Ovary (tissue), 10 donors: ENCODE measurements at regions of chr19 and their contacts with region 1.

Region 1: DNA sequence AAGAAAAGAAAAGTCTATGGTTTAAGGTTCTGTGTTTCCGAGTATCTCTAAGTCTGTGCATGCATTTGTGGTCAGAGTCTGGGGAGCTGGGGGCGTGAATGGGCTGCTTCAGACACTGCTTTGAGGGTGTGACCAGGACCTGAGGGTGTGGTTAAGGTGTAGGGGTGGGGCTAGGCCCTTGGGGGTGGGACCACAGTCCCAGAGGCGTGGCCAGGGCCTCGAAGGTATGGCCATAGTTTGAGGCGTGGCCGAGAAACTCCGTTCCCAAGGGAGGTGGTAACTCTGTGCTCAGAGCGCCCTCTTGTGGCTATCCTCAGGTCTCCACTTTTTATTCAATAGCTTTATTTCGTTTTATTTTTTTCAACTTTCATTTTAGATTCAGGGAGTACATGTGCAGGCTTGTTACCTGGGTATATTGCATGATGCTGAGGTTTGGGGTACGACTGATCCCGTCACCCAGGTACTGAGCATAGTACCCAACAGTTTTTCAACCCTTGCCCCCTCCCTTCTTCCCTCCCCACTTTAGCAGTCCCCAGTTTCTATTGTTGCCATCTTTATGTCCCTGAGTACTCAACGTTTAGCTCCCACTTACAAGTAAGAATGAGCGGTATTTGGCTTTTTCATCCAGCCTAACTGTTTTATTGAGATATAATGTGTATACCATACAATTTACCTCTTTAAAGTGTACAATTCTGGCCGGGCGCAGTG is 7.0 kb upstream of the CBLC start:
- DNase-seq: peak; percentile 85 to 92 (median 89)
- H3K4me3 ChIP-seq: no peak overlapping the region
- H3K27ac ChIP-seq: no peak overlapping the region
- H3K4me1 ChIP-seq: no peaks in the 10 kb centered on the region
- H3K27me3 ChIP-seq: no peaks in the 10 kb centered on the region
- CTCF ChIP-seq: peak; percentile 88 to 95 (median 89)
- EP300 ChIP-seq: no peak
- POLR2A ChIP-seq: no peak

Region 2: GRCh38 chr19:44576843-44577565 is 193.7 kb before region 1 on chr19:
- intact Hi-C with region 1: loop called in 1 of 4 experiments (anchors 5 kb)
- DNase-seq: no peak
- H3K4me3 ChIP-seq: no peak overlapping the region
- H3K27ac ChIP-seq: no peak overlapping the region
- H3K4me1 ChIP-seq: no peaks in the 10 kb centered on the region
- H3K27me3 ChIP-seq: no peaks in the 10 kb centered on the region
- CTCF ChIP-seq: no peak
- EP300 ChIP-seq: no peak
- POLR2A ChIP-seq: no peak

Region 3: DNA sequence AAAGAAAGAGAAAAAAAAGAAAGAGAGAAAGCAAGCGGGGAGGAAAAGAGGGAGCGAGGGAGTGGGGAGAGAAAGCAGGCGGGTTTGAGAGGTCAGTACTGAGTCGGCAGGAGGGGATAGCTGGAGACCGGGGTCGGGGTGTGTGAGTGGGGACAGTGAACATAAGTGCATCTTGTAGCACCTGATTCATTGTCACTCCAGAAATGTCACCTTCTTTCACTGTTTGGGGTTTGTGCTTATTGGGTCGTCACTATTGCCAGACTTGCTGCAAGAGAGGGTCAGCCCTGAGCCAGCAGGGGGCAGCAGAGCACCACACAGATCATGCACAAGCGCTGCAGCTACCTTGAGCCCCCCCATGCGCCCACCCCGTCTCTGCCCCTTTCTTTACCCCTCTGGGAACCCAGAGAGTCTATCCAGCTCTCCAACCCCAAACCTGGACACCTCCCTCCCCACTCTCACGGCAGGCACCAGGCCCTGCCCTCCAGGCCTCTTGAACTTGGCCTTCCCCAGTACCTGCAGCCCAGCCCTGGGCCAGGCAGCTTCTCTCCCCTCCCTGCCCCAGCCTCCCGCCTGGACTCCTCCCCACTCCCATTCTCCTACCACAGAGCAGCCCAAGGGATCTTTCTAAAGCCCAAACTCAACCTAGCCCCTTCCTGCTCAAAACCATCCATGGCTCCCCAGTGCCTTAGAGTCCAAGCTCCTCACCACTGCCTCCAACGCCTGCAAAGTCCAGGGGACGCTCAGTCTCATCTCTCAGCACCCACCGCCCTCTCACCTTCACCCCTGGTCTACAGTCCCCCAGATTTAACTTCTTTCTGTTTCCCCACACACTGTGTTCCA is 81.4 kb before region 1 on chr19:
- intact Hi-C with region 1: loop called in 3 of 4 experiments (anchors 5 to 10 kb)
- DNase-seq: peak; percentile 70 to 86 (median 82)
- H3K4me3 ChIP-seq: no peak overlapping the region
- H3K27ac ChIP-seq: no peak overlapping the region
- H3K4me1 ChIP-seq: peaks cover 4% of the 10 kb centered on the region
- H3K27me3 ChIP-seq: no peaks in the 10 kb centered on the region
- CTCF ChIP-seq: peak; percentile 81 to 87 (median 83)
- EP300 ChIP-seq: no peak
- POLR2A ChIP-seq: no peak

Region 4: GRCh38 chr19:44723952-44724319 is 46.8 kb before region 1 on chr19:
- intact Hi-C with region 1: loop called (anchors 1 to 5 kb)
- DNase-seq: peak; percentile 71 to 88 (median 84)
- H3K4me3 ChIP-seq: no peak overlapping the region
- H3K27ac ChIP-seq: no peak overlapping the region
- H3K4me1 ChIP-seq: peaks cover 12% of the 10 kb centered on the region
- H3K27me3 ChIP-seq: no peaks in the 10 kb centered on the region
- CTCF ChIP-seq: peak; percentile 87 to 95 (median 95)
- EP300 ChIP-seq: no peak
- POLR2A ChIP-seq: no peak

Region 5: DNA sequence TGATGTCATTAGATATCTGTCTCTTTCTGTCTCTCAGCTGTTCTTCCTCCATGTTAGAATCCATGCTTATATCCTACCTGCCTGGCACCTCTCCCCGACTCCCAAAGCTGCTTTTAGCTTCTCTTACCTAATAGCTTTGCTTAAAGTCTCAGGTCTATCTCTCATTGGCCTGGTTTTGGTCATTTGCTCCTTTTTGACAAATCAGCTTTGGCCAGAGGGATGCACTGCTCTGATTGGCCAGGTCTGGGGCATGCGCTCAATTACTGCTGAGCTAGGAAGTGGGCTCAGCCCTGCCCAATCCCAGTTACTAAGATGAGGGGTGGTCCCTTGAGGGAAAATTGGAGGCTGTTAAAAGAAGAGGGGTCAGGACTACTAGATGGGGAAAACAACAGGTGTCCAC is 256.7 kb after region 1 on chr19:
- intact Hi-C with region 1: no loop called
- DNase-seq: no peak
- H3K4me3 ChIP-seq: no peak overlapping the region
- H3K27ac ChIP-seq: no peak overlapping the region
- H3K4me1 ChIP-seq: no peaks in the 10 kb centered on the region
- H3K27me3 ChIP-seq: no peaks in the 10 kb centered on the region
- CTCF ChIP-seq: no peak
- EP300 ChIP-seq: no peak
- POLR2A ChIP-seq: no peak